Caco-2 (cell line): ENCODE measurements at regions of chr2 and their contacts with region 1.

Region 1: DNA sequence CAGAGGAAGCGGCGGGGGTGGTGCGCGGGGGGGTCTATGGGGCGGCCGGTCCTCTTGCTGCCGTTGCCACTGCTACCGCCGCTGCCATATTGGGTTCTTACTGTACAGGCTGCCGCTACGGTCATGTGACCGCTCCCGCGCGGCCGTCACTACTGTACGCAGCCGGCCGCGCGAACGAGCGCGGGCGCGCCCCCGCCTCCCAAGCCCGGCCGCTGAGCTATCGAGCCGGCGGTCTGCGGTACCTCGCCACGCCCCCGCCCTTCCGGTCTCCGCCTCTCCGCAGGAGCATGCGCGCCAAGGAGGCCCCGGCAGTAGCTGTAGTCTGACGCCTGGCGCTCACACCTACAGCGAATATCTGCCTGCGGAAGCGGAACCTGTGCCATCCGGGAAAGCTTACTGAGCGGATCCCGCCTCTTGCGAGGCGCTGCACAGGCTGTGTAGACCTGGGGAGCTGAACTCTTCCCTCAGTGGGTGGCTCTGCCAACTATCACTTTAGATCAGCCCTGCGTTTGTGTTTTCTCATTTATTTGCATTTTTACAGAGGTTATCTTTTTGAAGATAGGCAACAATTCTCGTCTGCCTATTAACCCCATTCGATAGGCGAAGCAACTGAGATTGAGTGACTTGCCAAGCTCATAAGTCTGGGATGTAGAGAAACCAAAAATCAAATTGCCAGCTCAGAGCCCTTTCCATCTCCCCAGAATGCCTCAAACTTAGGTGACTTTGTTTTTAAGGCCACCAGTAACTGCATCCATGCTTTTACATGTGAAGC is at the start of gene ASXL2:
- DNase-seq: peak; percentile 98 to 99
- H3K4me3 ChIP-seq: peak within 1 kb of the TSS; percentile 65
- H3K4me3 Mint-ChIP-seq: peak within 1 kb of the TSS; percentile 99
- H3K27ac Mint-ChIP-seq: peak within 1 kb of the TSS; percentile 99
- H3K4me1 ChIP-seq: peaks cover 6% of the 10 kb centered on the region
- H3K4me1 Mint-ChIP-seq: peaks cover 30% of the 10 kb centered on the region
- H3K27me3 ChIP-seq: no peaks in the 10 kb centered on the region
- H3K27me3 Mint-ChIP-seq: no peaks in the 10 kb centered on the region
- CTCF ChIP-seq: no peak
- total RNA-seq, gene ASXL2: 35.7 and 41.1 TPM in 2 replicates

Region 2: DNA sequence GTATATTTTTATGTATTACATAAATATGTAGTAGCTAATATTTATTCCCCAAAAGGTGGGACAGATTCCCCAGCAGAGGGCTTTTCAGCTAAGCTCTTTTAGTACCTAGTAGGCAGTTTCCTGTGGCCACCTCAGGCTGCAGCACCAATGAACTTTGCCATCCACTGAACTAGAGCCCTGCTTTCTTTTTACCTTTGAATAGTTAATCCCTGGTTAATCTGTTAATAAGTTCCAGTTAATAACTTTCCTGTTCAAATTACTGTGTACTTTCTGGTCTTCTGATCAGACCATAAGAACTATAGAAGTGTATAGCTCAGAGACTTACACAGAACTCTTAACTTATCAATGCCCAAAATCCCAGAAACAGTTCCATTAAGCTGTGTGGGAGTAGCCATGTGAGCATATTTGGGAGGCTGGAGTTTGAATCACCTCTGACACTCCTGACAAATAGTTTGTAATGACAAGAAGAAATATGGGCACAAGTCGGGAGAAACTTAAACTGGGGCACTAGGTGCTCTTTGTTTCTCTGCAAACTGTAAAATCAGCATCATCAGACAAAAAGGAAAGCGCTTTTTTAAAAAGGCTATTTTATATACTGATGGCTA is 40.3 kb before region 1 on chr2:
- CTCF ChIA-PET with region 1: no interaction called
- POLR2A ChIA-PET with region 1: no interaction called
- intact Hi-C with region 1: no loop called
- DNase-seq: no peak
- H3K4me3 ChIP-seq: no peak overlapping the region
- H3K4me3 Mint-ChIP-seq: no peak overlapping the region
- H3K27ac Mint-ChIP-seq: no peak overlapping the region
- H3K4me1 ChIP-seq: no peaks in the 10 kb centered on the region
- H3K4me1 Mint-ChIP-seq: peaks cover 6% of the 10 kb centered on the region
- H3K27me3 ChIP-seq: no peaks in the 10 kb centered on the region
- H3K27me3 Mint-ChIP-seq: no peaks in the 10 kb centered on the region
- CTCF ChIP-seq: no peak

Region 3: GRCh38 chr2:25851740-25852503 is 26.6 kb before region 1 on chr2:
- CTCF ChIA-PET with region 1: interaction called, 15 read pairs
- POLR2A ChIA-PET with region 1: interaction called, 18 read pairs
- intact Hi-C with region 1: loop called (anchors 1 kb)
- DNase-seq: peak in 1 of 2 experiments; percentile 56
- H3K4me3 ChIP-seq: no peak overlapping the region
- H3K4me3 Mint-ChIP-seq: no peak overlapping the region
- H3K27ac Mint-ChIP-seq: no peak overlapping the region
- H3K4me1 ChIP-seq: no peaks in the 10 kb centered on the region; the same call in 1 of the 2 replicates
- H3K4me1 Mint-ChIP-seq: peaks cover 7% of the 10 kb centered on the region
- H3K27me3 ChIP-seq: no peaks in the 10 kb centered on the region
- H3K27me3 Mint-ChIP-seq: no peaks in the 10 kb centered on the region
- CTCF ChIP-seq: peak; percentile 69 to 70

Region 4: DNA sequence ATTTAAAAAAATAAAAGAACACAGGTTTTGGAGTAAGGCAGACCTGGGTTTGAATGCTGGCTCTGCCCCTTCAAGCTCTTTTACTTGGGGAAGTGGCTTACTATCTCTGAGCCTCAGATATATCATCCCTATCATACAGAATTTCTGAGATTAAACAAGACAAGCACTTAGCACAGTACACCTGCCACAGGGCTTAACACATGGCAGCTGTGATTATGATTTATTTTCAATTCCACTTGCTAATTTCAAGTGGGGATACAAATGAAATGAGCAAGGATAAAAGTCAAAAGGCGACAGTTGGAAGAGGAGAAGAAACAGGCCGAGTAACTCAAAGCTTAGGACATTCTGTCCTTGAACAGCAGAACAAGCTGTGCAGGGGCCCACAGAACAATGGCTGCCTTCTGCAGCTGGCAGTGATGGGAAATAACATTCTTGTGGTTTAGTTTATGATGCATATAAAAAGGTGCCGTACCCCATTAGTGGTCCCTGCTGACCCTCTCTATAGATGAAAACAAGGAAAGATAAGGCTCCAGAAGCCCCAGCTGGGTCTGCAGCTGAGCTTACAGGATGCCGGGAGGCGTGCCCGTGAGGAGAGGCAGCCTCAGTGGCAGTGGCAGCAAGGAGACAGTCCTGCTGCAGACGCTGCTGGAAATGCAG is 58.5 kb after region 1 on chr2:
- CTCF ChIA-PET with region 1: interaction called, 4 read pairs
- POLR2A ChIA-PET with region 1: interaction called, 16 read pairs
- intact Hi-C with region 1: no loop called
- DNase-seq: no peak
- H3K4me3 ChIP-seq: no peak overlapping the region
- H3K4me3 Mint-ChIP-seq: no peak overlapping the region
- H3K27ac Mint-ChIP-seq: no peak overlapping the region
- H3K4me1 ChIP-seq: peaks cover 16% of the 10 kb centered on the region
- H3K4me1 Mint-ChIP-seq: peaks cover 11% of the 10 kb centered on the region
- H3K27me3 ChIP-seq: no peaks in the 10 kb centered on the region
- H3K27me3 Mint-ChIP-seq: no peaks in the 10 kb centered on the region
- CTCF ChIP-seq: no peak

Region 5: DNA sequence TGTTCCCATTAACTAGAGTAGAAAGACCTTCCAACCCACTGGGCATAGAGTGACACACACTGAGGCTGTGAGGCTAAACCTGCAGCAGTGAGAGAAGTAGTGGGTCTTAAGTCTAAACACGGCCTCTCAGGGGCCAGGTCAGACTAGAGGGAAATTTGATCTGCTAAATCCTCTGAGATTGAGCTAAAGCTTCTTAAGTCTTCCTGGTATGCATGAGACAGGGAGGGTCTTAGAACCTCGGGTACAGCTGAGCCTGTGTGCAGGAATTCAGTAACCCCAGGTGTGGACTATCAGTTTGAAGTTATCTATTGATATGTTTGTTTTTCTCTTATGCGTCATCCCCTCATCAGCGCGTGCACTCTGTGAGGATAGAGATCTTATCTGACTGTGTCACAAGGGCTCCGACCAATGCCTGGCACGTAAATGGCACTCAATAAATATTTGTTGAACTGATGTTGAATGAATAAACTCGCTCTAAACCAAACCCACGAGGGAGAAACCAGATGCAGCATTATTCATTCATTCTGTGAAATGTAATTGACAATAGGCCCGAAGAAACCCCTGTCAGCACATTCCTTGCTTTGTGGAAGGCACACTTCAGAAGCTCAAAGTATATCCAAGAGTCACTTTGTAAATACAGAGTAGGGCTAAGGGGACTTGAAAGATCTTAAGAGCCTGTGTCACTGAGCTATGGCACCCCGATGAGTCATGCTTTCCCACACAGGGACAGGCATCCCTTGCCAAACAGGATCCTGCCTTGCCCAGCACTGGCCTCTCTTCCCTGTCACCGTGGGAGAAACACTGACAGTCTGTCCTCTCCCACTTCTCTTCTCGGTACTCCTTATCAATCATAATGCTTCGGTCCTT is 133.7 kb after region 1 on chr2:
- CTCF ChIA-PET with region 1: interaction called, 3 read pairs
- POLR2A ChIA-PET with region 1: interaction called, 10 read pairs
- intact Hi-C with region 1: loop called (anchors 10 kb)
- DNase-seq: peak; percentile 91 to 96
- H3K4me3 ChIP-seq: peak overlapping the region; percentile 4
- H3K4me3 Mint-ChIP-seq: peak overlapping the region; percentile 55
- H3K27ac Mint-ChIP-seq: peak overlapping the region; percentile 91
- H3K4me1 ChIP-seq: peaks cover 40% of the 10 kb centered on the region
- H3K4me1 Mint-ChIP-seq: peaks cover 45% of the 10 kb centered on the region
- H3K27me3 ChIP-seq: no peaks in the 10 kb centered on the region
- H3K27me3 Mint-ChIP-seq: no peaks in the 10 kb centered on the region
- CTCF ChIP-seq: no peak

Region 6: DNA sequence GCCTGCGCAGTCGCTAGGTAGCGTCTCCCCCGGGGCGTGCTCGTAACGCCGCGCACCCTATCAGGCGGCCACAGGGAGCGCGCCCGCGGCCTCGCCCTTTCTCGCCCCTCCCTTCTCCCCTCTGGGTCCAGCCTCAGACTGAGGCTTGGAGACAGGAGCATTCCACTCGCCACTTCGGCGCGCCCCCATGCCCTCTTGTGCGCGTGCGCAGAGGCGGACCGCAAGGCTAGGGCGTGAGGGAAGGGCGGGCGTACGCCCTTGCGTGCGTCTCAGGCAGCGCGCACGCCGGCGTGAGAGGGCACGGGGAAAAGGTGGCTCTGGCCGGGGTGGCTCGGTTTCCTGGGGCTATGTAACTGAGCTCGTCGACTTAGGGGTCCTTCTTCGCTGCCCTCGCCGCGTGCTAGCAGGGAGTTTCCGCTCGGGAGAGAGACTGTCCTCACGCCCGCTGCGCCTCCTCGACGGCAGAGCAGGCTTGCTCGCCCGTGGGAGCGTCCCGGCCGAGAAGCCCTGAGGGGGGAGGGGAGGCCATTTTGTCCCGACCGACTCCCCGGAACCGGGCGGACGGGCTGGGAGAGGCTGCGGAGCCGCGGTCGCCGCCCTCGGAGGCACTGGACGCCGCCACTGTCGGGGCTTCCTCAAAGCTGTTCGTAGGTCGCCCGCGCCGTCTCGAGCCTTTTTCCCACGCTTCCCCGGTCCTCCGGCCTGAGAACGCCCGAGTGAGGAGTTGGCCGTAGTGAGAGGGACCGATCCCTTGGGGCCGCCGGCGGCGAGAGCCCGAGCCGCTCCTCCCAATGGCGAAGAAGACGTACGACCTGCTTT is 155.5 kb after region 1 on chr2 and contains the start of gene RAB10:
- CTCF ChIA-PET with region 1: interaction called, 4 read pairs
- POLR2A ChIA-PET with region 1: interaction called, 8 read pairs
- intact Hi-C with region 1: loop called (anchors 5 kb)
- DNase-seq: peak; percentile 100
- H3K4me3 ChIP-seq: peak within 1 kb of the TSS; percentile 76
- H3K4me3 Mint-ChIP-seq: peak within 1 kb of the TSS; percentile 76
- H3K27ac Mint-ChIP-seq: peak within 1 kb of the TSS; percentile 60
- H3K4me1 ChIP-seq: 0 out of 2 replicates have a peak, but pooled peaks cover 15% of the 10 kb centered on the region
- H3K4me1 Mint-ChIP-seq: peaks cover 18% of the 10 kb centered on the region
- H3K27me3 ChIP-seq: no peaks in the 10 kb centered on the region
- H3K27me3 Mint-ChIP-seq: no peaks in the 10 kb centered on the region
- CTCF ChIP-seq: no peak
- total RNA-seq, gene RAB10: 203 and 213 TPM in 2 replicates